ENCODE measurements at regions of chr10 and their contacts with region 1.

Region 1: GRCh38 chr10:97759158-97759887 is 12.5 kb downstream of the SFRP5 start:
- DNase-seq: peak; percentile 67
- H3K4me3 Mint-ChIP-seq: no peak overlapping the region
- H3K27ac Mint-ChIP-seq: no peak overlapping the region
- H3K4me1 Mint-ChIP-seq: no peaks in the 10 kb centered on the region
- H3K27me3 Mint-ChIP-seq: no peaks in the 10 kb centered on the region
- CTCF ChIP-seq: peak; percentile 77

Region 2: GRCh38 chr10:97743169-97743943 is 16.0 kb before region 1 on chr10:
- CTCF ChIA-PET with region 1: interaction called, 15 read pairs
- POLR2A ChIA-PET with region 1: no interaction called
- intact Hi-C with region 1: no loop called
- DNase-seq: no peak
- H3K4me3 Mint-ChIP-seq: no peak overlapping the region
- H3K27ac Mint-ChIP-seq: peak overlapping the region; percentile 3
- H3K4me1 Mint-ChIP-seq: peaks cover 28% of the 10 kb centered on the region
- H3K27me3 Mint-ChIP-seq: no peaks in the 10 kb centered on the region
- CTCF ChIP-seq: no peak

Region 3: GRCh38 chr10:97810446-97810845 is 51.1 kb after region 1 on chr10:
- CTCF ChIA-PET with region 1: no interaction called
- POLR2A ChIA-PET with region 1: no interaction called
- intact Hi-C with region 1: no loop called
- DNase-seq: peak; percentile 63
- H3K4me3 Mint-ChIP-seq: no peak overlapping the region
- H3K27ac Mint-ChIP-seq: no peak overlapping the region
- H3K4me1 Mint-ChIP-seq: peaks cover 12% of the 10 kb centered on the region
- H3K27me3 Mint-ChIP-seq: no peaks in the 10 kb centered on the region
- CTCF ChIP-seq: no peak

Region 4: DNA sequence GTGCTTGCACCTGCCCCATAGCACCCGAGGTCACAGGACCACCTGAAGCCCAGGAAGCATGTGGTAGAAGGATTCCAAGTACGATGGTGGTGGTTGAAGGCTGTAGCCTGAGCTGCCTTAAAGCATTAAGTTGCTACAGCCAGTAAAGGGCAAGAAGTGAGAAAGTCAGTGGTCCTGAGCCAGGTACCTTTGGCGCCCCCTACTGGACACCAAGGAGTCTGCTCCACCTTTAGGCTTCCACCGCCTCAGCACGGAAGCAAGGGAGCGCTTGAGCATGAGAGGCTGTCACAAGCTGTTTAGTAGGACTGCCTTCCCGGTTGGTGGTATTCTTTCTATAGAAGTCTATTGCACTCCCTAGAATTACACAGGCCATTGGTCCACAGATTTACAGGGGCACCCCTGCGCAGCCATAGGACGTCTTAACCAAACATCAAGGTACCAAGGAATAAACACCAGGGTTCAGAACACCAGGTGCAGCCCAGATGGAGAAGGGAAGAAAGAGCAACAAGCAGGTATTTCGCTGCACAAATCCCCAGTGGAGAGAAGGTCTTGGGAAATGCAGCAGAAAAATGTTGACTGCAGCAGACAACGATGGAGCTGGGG is 268.9 kb after region 1 on chr10:
- CTCF ChIA-PET with region 1: no interaction called
- POLR2A ChIA-PET with region 1: no interaction called
- intact Hi-C with region 1: loop called (anchors 1 kb)
- DNase-seq: peak; percentile 66
- H3K4me3 Mint-ChIP-seq: no peak overlapping the region
- H3K27ac Mint-ChIP-seq: no peak overlapping the region
- H3K4me1 Mint-ChIP-seq: no peaks in the 10 kb centered on the region
- H3K27me3 Mint-ChIP-seq: peaks cover 53% of the 10 kb centered on the region
- CTCF ChIP-seq: peak; percentile 53

Measured in MCF 10A (cell line).